Left ventricle myocardium superior (tissue), 1 donor: ENCODE measurements at regions of chr18 and their contacts with region 1.

Region 1: GRCh38 chr18:24014062-24014985 is at the start of gene TTC39C:
- DNase-seq: peak; percentile 80
- ATAC-seq: peak; percentile 88
- total RNA-seq, gene TTC39C: 4.1 TPM

Region 2: DNA sequence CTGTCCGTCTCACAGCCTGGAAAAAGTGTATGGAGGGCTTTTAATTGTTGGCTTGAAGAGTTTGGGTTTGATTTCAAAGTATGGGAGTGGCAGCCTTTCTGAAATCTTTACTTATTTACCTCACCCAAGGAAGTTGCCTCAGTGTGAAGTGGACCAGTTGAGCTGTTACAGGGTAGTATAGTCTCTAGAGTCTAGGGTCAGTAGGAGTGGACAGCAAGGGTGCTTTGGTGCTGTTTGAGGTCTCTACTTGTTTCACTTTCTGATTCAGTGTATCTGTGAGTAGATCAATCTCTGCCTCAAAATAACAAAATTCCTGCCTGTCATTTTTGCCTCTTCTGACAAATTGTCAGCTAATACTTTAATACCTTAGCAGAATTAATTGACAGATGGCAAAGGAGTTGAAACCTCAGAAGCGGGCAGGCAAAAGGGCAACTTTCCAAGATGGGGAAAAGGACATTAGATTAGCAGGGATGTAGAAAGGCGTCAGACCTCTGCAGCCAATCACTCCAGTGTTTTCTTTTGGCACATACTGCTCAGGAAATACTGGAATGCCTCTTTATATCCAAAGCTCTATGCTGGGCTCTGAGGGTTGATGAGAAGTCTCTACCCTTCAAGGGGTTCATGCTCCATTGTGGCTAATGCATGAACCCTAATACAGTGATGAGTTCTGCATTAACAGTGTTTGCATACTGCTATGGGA is 555.3 kb before region 1 on chr18:
- intact Hi-C with region 1: no loop called
- DNase-seq: no peak
- ATAC-seq: peak; percentile 39

Region 3: GRCh38 chr18:23943903-23944624 is 70.3 kb before region 1 on chr18:
- intact Hi-C with region 1: no loop called
- DNase-seq: no peak
- ATAC-seq: no peak

Region 4: DNA sequence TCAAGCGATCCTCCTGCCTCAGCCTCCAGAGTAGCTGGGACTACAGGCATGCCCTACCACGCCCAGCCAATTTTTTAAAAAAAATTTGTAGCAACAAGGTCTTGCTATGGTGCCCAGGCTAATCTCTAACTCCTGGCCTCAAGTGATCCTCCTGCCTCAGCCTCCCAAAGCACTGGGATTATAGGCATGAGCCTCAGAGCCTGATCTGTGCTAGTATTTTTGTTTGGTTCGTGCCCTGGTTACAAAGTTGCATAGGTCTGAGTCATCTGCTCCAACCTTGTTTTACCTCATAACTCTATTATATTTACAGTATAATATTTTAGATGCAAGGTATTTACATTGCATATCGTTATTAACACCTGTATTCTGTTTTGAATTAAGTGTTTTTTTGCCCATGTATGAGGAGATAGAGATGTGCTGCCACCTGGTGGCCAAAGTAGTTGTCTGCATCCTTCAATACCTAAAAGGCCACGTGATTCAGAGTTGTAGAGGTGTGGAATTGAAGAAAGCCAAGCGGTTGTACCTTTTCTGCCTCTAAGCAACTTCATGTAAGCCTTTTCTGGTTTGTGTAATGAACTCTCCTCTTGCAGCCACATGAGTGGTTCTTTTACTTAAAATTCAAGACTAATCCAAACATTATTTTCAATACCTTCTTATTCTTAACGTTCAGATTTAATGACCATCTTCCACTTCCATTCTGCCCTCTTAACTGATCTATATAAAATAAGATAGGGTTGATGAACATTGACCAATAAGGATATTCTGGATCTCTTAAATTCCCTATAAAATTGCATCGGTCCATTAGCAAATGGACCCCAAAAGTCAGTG is 104.6 kb after region 1 on chr18:
- intact Hi-C with region 1: loop called (anchors 10 kb)
- DNase-seq: peak; percentile 74
- ATAC-seq: peak; percentile 68

Region 5: DNA sequence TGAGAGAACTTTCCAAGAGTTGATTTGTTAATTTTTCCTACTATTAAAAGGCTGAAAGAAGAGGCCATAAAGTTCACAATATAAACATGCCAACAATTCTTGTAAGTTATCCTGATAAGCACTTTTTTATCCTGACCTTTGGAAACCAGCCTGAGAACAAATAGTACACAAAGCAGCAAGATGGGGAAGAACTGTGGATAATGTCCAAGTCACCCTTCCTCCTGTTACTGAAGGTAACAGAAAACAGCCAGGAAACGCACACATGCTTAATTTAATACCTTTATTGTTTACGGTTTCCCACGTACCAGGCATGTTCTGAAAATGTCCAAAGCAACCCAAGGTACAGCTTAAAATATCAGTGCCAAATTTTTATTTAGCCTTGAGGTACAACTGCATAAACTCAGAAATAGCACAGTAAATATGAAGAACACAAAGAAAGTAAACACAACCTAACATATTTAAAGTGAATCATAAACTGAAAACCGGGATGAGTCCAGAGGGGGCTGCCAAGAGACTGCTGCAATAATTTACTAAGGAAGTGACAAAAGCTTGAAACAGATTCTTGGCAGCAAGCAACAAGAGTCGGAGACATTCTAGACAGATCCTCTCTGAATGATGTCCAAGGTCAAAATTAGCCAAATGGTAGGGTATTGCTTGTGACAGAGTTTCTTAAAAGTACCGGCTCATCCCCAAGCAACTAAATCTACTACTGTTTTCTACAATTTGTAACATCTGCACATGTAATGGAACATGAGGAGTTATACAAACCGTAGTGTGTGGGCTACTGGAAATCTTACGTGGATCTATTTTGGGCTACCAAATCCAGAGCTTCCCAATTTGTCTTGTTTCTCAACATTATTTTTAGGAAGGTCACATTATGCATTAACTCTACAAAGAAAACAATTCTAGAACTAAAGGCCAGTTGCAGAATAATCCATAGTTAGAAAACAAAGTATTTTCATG is 217.7 kb after region 1 on chr18:
- intact Hi-C with region 1: no loop called
- DNase-seq: no peak
- ATAC-seq: peak; percentile 78